ENCODE measurements at regions of chr5 and their contacts with region 1.

Region 1: DNA sequence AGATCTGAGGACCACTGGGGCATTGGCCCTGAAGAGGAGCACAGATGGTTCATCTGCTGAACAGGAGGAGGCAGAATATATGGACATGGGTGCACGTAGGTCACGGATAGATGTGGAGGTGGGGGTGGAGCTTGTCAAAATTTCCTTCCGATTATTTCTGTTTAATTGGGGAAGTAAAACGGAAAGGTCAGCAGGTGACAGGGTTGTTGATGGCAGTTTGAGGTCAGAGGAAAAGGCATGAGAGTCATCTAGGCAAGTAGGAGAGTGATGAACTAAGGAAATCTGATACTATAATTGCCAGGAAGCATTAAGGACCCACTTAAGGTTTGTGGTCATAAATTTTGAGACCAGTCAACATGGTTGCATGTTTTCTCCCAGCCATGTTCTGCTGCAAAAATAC is 8.4 kb upstream of the FAM81B start:
- DNase-seq: no peak

Region 2: GRCh38 chr5:94397508-94397907 is 985.3 kb before region 1 on chr5:
- intact Hi-C with region 1: no loop called
- DNase-seq: no peak

Region 3: GRCh38 chr5:95822542-95823181 is 439.9 kb after region 1 on chr5 and contains the start of gene GLRX:
- intact Hi-C with region 1: loop called in 1 of 2 experiments (anchors 5 kb)
- DNase-seq: peak; percentile 85
- total RNA-seq, gene GLRX: 31.0 to 52.5 TPM

Measured in posterior vena cava (tissue), 2 donors.